Activated naive CD4-positive, alpha-beta T cell treated with anti-CD3 and anti-CD28 coated beads for 36 hours (primary cell): ENCODE measurements at regions of chr9 and their contacts with region 1.

Region 1: DNA sequence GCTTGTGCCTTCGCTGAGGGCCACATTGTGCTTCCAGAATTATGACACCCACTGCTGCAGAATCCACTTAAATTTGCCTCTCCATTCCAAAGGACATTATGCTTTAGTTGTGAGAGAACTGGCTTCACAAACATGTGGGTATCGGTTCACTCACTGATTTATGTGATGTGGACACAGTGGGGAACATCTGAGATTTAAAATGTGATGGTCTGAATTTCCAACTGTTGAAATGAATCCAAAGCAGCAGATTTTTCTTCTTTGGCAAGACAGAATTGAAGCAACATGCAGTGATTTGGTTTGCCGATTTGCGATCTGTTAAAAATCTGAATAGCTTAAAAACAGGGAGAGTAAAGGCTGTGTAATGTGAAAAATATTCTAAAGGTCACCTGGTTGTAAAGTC is 20.3 kb downstream of the PCSK5 start:
- DNase-seq: no peak
- H3K4me3 Mint-ChIP-seq: no peak overlapping the region
- H3K27ac Mint-ChIP-seq: no peak overlapping the region
- H3K4me1 Mint-ChIP-seq: peaks cover 58% of the 10 kb centered on the region
- H3K27me3 Mint-ChIP-seq: no peaks in the 10 kb centered on the region

Region 2: GRCh38 chr9:75962013-75962661 is 51.4 kb after region 1 on chr9:
- CTCF ChIA-PET with region 1: no interaction called
- intact Hi-C with region 1: no loop called
- DNase-seq: peak; percentile 17
- H3K4me3 Mint-ChIP-seq: no peak overlapping the region
- H3K27ac Mint-ChIP-seq: peak overlapping the region; percentile 48
- H3K4me1 Mint-ChIP-seq: peaks cover 36% of the 10 kb centered on the region
- H3K27me3 Mint-ChIP-seq: no peaks in the 10 kb centered on the region

Region 3: GRCh38 chr9:75993434-75993833 is 82.7 kb after region 1 on chr9:
- CTCF ChIA-PET with region 1: no interaction called
- intact Hi-C with region 1: loop called (anchors 1 kb)
- DNase-seq: no peak
- H3K4me3 Mint-ChIP-seq: no peak overlapping the region
- H3K27ac Mint-ChIP-seq: peak overlapping the region; percentile 59
- H3K4me1 Mint-ChIP-seq: peaks cover 68% of the 10 kb centered on the region
- H3K27me3 Mint-ChIP-seq: no peaks in the 10 kb centered on the region